ENCODE measurements at regions of chr1 and their contacts with region 1.

Region 1: DNA sequence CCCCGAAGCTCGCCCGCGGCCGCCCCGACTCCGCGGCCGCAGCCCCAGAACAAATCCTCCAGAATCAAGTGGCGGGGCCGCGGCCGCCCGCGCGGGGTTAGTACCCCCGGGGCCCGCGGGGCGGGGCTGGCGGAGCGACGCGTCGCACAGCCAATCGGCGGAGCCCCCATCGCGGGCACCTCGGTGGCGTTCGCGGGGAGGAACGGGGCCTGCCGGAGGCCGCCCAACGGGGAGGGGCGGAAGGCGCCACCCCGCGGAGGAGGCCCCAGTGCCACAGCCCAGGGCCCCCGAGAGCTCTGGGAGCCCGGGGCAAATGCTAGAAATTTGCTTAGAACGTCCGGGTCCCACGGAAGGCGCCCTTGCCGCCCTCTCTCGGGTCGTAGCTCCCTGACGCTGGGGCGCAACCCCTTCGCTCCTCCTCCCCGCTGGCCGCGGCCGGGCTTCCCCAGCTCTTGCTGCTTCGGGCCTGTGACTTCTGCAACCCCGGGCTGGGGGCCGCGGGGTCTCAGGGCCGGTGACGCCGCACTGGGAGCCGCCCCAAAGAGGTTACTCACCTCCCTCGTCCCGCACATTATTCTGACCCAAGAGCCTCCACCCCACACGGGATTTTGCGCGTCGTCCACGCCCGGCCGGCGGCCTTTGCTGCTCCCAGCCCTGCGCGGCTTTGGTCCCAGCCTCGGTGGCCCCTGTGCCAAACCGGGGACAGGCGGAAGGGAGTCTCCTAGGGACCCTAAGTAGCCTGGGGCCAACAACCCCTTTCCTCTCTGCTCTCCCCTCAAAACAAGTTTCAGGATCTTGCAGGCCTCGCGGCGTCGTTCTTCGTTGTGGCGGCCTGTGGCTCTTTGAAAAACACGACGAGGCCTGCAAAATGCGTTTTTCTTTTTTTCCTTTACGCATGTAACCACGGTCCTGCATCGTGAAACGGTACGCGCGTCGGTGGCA is at the start of gene RUNX3:
- DNase-seq: no peak
- H3K4me3 ChIP-seq: no peak within 1 kb of the TSS
- H3K27ac ChIP-seq: no peak within 1 kb of the TSS
- H3K4me1 ChIP-seq: no peaks in the 10 kb centered on the region
- H3K27me3 ChIP-seq: peaks cover 90 to 92% of the 10 kb centered on the region in 2 experiments
- CTCF ChIP-seq: no peak
- POLR2A ChIP-seq: no peak
- total RNA-seq, gene RUNX3: not detected in 2 replicates

Region 2: GRCh38 chr1:25099343-25099951 is 169.0 kb after region 1 on chr1:
- CTCF ChIA-PET with region 1: interaction called, 16 read pairs
- POLR2A ChIA-PET with region 1: no interaction called
- dilution Hi-C with region 1: no loop called
- intact Hi-C with region 1: loop called (anchors 1 kb)
- DNase-seq: no peak
- H3K4me3 ChIP-seq: no peak overlapping the region
- H3K27ac ChIP-seq: no peak overlapping the region
- H3K4me1 ChIP-seq: peaks cover 6% of the 10 kb centered on the region
- H3K27me3 ChIP-seq: peaks cover 0 to 2% of the 10 kb centered on the region in 2 experiments
- CTCF ChIP-seq: no peak
- POLR2A ChIP-seq: no peak

Region 3: GRCh38 chr1:25204797-25205480 is 274.5 kb after region 1 on chr1:
- CTCF ChIA-PET with region 1: interaction called, 3 read pairs
- POLR2A ChIA-PET with region 1: no interaction called
- dilution Hi-C with region 1: no loop called
- intact Hi-C with region 1: loop called (anchors 5 kb)
- DNase-seq: peak; percentile 21
- H3K4me3 ChIP-seq: no peak overlapping the region
- H3K27ac ChIP-seq: no peak overlapping the region
- H3K4me1 ChIP-seq: no peaks in the 10 kb centered on the region
- H3K27me3 ChIP-seq: peaks cover 0 to 6% of the 10 kb centered on the region in 2 experiments
- CTCF ChIP-seq: peak; percentile 57 to 61
- POLR2A ChIP-seq: no peak

Measured in endothelial cell of umbilical vein (primary cell).